ENCODE measurements at regions of chr11 and their contacts with region 1.

Region 1: GRCh38 chr11:8070417-8071115 is 10.4 kb upstream of the TUB start:
- DNase-seq: peak in 2 of 7 donors; percentile 29 to 54
- H3K4me3 ChIP-seq: no peak overlapping the region
- H3K27ac ChIP-seq: no peak overlapping the region
- H3K4me1 ChIP-seq: peaks cover 19 to 24% of the 10 kb centered on the region in 2 donors
- H3K27me3 ChIP-seq: no peaks in the 10 kb centered on the region
- CTCF ChIP-seq: peak in 5 of 6 experiments; percentile 51 to 62 (median 58)
- POLR2A ChIP-seq: no peak

Region 2: GRCh38 chr11:7910286-7910788 is 160.2 kb before region 1 on chr11:
- intact Hi-C with region 1: no loop called
- DNase-seq: no peak
- H3K4me3 ChIP-seq: no peak overlapping the region
- H3K27ac ChIP-seq: no peak overlapping the region
- H3K4me1 ChIP-seq: no peaks in the 10 kb centered on the region
- H3K27me3 ChIP-seq: no peaks in the 10 kb centered on the region
- CTCF ChIP-seq: no peak
- POLR2A ChIP-seq: no peak

Region 3: GRCh38 chr11:8033305-8034105 is 37.1 kb before region 1 on chr11:
- intact Hi-C with region 1: loop called (anchors 5 kb)
- DNase-seq: peak; percentile 80 to 95 (median 89)
- H3K4me3 ChIP-seq: no peak overlapping the region
- H3K27ac ChIP-seq: peak overlapping the region in 1 of 5 donors; percentile 20
- H3K4me1 ChIP-seq: peaks cover 15 to 29% of the 10 kb centered on the region in 2 donors
- H3K27me3 ChIP-seq: no peaks in the 10 kb centered on the region
- CTCF ChIP-seq: peak; percentile 80 to 96 (median 90)
- POLR2A ChIP-seq: no peak

Region 4: GRCh38 chr11:8201644-8202365 is 131.2 kb after region 1 on chr11:
- intact Hi-C with region 1: no loop called
- DNase-seq: peak in 1 of 7 donors; percentile 37
- H3K4me3 ChIP-seq: no peak overlapping the region
- H3K27ac ChIP-seq: no peak overlapping the region
- H3K4me1 ChIP-seq: no peaks in the 10 kb centered on the region
- H3K27me3 ChIP-seq: no peaks in the 10 kb centered on the region
- CTCF ChIP-seq: no peak
- POLR2A ChIP-seq: no peak

Region 5: DNA sequence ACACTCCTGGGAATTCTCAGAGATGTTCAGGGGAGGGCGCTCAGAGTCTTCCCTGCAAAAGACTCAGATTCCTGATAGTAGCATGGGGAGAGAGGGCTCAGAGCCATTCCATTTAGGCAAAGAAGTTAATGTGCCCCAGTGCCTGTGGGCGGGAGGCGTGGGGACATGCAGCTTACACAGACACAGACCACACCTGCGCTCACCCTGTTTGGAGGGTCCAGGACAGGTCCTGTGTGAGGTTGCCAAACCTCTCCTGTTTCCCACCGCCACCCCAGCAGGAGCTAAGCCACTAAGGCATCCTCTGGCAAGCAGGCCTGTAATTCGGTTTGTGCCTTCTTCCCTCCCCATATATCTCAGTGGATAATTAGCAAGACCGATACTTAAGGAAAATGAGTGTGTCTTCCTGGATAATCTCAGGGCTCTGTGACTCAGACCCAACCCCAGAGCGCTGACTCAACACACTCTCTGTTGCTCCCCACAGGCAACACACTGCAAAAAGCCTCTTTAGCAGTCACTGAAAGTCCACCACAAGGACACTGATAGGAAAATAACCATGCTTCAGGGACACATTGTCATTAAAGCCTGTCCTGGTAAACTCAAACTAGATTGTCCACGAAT is 312.0 kb after region 1 on chr11:
- intact Hi-C with region 1: no loop called
- DNase-seq: peak; percentile 51 to 82 (median 80)
- H3K4me3 ChIP-seq: no peak overlapping the region
- H3K27ac ChIP-seq: peak overlapping the region; percentile 47 to 73 (median 71)
- H3K4me1 ChIP-seq: peaks cover 4 to 13% of the 10 kb centered on the region in 2 donors
- H3K27me3 ChIP-seq: no peaks in the 10 kb centered on the region
- CTCF ChIP-seq: no peak
- POLR2A ChIP-seq: no peak

Measured in adrenal gland (tissue), 19 donors.